Activated T-helper 1 cell treated with anti-CD3 and anti-CD28 coated beads, Interleukin-12 subunit alpha, Interleukin-12 subunit beta, Interleukin-2, Interleukin-4 antibody, amounts not matched to agents 30 ng/mL and 10 ng/mL and 1 ng/mL, durations not matched to agents 14 hours and 24 hours and 36 hours (primary cell): ENCODE measurements at regions of chr2 and their contacts with region 1.

Region 1: GRCh38 chr2:10043906-10044601 is 704 bp downstream of the KLF11 start:
- DNase-seq: peak; percentile 86
- H3K4me3 Mint-ChIP-seq: peak overlapping the region; percentile 77
- H3K27ac Mint-ChIP-seq: peak overlapping the region; percentile 66
- H3K4me1 Mint-ChIP-seq: peaks cover 14% of the 10 kb centered on the region
- H3K27me3 Mint-ChIP-seq: peaks cover 22% of the 10 kb centered on the region

Region 2: DNA sequence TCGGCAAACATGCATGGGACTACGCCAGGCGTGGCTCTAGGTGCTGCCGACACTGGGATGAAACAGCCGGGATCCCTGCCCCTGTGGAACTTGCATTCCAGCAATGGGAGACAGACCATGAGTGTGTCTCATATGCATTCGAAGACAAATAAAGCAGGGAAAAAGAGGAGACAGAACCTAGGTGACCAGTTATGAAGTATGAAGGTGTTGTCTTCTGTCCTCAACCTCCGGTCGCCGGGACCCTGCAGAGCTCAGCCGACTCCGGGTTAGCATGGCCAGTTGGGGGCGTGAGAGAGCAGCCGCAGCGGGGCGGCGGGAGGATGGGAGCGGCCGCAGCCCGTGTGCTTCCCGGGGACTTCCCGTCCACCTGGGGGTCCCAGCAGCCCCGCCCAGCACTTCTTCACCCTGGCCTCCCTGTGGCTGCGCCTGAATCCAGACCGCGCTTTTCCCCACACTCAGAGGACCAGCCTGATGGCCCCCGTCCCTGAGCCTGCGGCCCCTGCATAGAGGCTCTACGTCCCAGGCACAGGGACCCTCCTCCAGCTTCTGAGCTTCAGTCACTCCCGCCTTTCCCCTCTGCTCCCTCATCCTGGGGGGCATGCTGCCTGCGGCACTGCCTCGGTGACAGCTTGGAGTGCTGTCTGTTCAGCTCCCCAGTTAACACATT is 1350.8 kb before region 1 on chr2:
- intact Hi-C with region 1: no loop called
- DNase-seq: no peak
- H3K4me3 Mint-ChIP-seq: no peak overlapping the region
- H3K27ac Mint-ChIP-seq: no peak overlapping the region
- H3K4me1 Mint-ChIP-seq: no peaks in the 10 kb centered on the region
- H3K27me3 Mint-ChIP-seq: peaks cover 26% of the 10 kb centered on the region

Region 3: DNA sequence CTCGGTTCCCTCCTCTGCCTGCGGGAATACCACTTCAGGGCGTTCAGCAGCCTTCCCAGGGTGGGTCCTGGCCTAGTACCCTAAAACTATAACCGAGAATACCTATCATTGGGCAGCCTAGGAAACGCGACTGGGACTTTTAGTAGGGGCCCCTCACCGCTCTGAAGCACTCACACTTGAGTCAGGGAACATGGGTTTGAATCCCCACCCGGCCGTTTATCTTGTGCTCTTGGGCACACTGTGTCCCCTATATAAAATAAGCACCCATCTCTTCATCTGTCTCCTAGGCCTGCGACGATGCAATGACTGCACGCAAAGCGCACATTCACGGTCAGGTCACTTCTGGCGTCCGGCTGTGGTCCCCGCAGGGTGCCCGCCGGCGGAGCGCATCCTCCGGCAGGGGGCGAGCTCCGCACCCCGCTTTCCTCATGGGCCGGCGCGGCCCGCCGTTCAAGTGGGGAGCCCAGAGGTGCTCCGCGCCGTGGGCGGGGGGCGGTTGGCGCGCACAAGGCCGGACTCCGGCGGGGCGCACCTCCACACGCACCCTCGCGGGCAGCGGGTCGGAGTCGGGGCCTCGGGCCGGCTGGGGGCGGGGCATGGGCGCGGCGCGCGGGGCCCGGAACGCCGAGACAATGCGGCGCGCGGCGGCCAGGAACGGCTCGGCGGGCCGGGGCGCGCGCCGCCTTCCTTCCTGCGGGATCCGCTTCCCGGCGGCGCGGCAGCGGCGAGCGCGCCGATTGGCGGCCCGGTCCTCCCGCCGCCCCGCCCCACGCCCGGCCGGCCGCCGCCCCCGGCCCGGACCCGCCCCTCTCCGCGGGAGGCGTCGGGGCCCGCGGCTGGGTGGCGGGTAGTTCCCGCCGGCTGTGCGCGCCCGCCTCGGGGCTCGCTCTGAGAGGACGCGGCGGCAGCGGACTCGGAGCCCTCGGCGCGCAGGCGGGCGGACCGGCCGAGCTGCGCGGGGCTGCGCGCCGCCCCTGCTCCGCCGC is 837.8 kb before region 1 on chr2 and contains the start of gene ASAP2:
- intact Hi-C with region 1: loop called (anchors 10 kb)
- DNase-seq: peak; percentile 34
- H3K4me3 Mint-ChIP-seq: peak within 1 kb of the TSS; percentile 67
- H3K27ac Mint-ChIP-seq: no peak within 1 kb of the TSS
- H3K4me1 Mint-ChIP-seq: peaks cover 5% of the 10 kb centered on the region
- H3K27me3 Mint-ChIP-seq: peaks cover 53% of the 10 kb centered on the region
- total RNA-seq, gene ASAP2: 0.34 and 1.2 TPM in 2 replicates

Region 4: GRCh38 chr2:9799665-9800632 is 244.1 kb before region 1 on chr2:
- intact Hi-C with region 1: loop called (anchors 1 kb)
- DNase-seq: peak; percentile 81
- H3K4me3 Mint-ChIP-seq: peak overlapping the region; percentile 66
- H3K27ac Mint-ChIP-seq: peak overlapping the region; percentile 85
- H3K4me1 Mint-ChIP-seq: peaks cover 37% of the 10 kb centered on the region
- H3K27me3 Mint-ChIP-seq: peaks cover 7% of the 10 kb centered on the region

Region 5: DNA sequence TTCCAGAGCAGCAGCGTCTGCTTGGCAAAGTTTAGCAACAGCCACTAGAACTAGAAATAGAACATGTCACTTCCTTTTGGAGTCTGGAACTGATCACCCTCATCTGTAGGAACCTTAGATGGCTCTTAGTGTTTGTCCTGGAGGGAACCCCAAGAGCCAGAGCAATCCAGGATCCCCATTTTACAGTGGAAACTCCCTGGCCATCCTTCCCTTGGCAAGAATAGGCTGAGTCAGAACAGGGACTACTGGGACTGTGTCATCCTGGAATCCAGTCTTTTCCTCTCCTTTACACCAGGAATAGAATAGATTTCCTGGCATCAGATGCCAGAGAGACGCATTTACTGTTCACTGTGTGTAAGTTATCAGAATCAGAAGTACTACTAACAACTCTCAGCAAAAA is 125.8 kb before region 1 on chr2:
- intact Hi-C with region 1: no loop called
- DNase-seq: no peak
- H3K4me3 Mint-ChIP-seq: no peak overlapping the region
- H3K27ac Mint-ChIP-seq: no peak overlapping the region
- H3K4me1 Mint-ChIP-seq: peaks cover 12% of the 10 kb centered on the region
- H3K27me3 Mint-ChIP-seq: no peaks in the 10 kb centered on the region

Region 6: GRCh38 chr2:9951272-9951972 is 92.6 kb before region 1 on chr2 and contains the start of gene GRHL1:
- intact Hi-C with region 1: loop called (anchors 1 kb)
- DNase-seq: peak; percentile 92
- H3K4me3 Mint-ChIP-seq: peak within 1 kb of the TSS; percentile 85
- H3K27ac Mint-ChIP-seq: peak within 1 kb of the TSS; percentile 82
- H3K4me1 Mint-ChIP-seq: peaks cover 24% of the 10 kb centered on the region
- H3K27me3 Mint-ChIP-seq: peaks cover 54% of the 10 kb centered on the region
- total RNA-seq, gene GRHL1: 1.4 and 1.5 TPM in 2 replicates